Dendritic cell treated with granulocyte-macrophage colony-stimulating factor and Interleukin-4, amounts not matched to agents 40 ng/mL and 50 ng/mL, for 4 days (primary cell): ENCODE measurements at regions of chr4 and their contacts with region 1.

Region 1: DNA sequence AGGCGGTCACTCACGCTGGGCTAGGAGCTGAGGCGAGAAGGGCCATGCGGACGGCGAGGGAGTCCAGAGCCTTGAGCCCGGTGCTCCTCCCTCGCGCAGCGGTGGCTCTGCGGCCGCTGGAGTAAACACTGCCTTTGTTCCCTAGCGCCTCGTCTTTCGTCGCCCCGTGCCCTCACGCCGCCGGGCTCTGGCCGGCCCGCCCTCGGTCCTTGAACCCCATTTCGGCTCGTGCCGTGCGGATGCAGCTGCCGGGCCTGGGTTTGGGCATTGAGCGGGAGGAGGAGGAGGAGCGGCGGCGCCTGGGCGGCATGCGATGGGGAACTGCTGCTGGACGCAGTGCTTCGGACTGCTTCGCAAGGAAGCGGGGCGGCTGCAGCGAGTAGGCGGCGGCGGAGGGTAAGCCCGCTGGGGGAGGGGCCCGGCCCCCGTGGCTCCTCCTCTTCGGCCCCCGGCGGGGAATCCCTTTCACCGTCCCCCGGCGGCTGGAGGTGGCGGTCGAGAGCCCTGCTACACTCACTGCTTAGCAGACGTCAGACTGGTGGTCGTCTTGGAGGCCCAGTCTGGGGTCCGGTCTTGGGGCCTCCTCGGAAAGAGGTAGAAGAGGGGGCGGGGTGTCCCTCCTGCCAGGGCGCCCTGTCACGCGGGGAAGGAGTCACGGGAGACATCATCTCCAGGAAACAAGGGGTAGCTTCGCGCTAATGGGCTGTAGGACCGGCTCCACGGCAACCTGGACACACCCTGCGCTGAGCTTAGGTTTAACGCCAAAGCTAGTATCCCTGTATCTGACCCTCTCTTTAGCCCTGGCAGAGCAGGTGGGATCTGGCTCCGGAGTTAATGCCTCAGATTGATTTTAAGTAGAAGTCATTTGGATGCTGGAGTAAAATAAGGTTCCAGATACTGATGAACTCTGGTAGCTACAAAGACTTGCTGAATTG is at the start of gene AP1AR:
- H3K4me3 Mint-ChIP-seq: peak within 1 kb of the TSS; percentile 98
- H3K27ac Mint-ChIP-seq: peak within 1 kb of the TSS; percentile 99
- H3K4me1 Mint-ChIP-seq: peaks cover 28% of the 10 kb centered on the region
- H3K27me3 Mint-ChIP-seq: no peaks in the 10 kb centered on the region

Region 2: GRCh38 chr4:112099701-112100297 is 132.2 kb before region 1 on chr4:
- intact Hi-C with region 1: loop called (anchors 1 kb)
- H3K4me3 Mint-ChIP-seq: no peak overlapping the region
- H3K27ac Mint-ChIP-seq: no peak overlapping the region
- H3K4me1 Mint-ChIP-seq: peaks cover 13% of the 10 kb centered on the region
- H3K27me3 Mint-ChIP-seq: peaks cover 1% of the 10 kb centered on the region

Region 3: GRCh38 chr4:112145326-112145819 is 86.7 kb before region 1 on chr4 and contains the start of gene FAM241A:
- intact Hi-C with region 1: loop called (anchors 1 kb)
- H3K4me3 Mint-ChIP-seq: peak within 1 kb of the TSS; percentile 86
- H3K27ac Mint-ChIP-seq: peak within 1 kb of the TSS; percentile 85
- H3K4me1 Mint-ChIP-seq: peaks cover 63% of the 10 kb centered on the region
- H3K27me3 Mint-ChIP-seq: no peaks in the 10 kb centered on the region

Region 4: DNA sequence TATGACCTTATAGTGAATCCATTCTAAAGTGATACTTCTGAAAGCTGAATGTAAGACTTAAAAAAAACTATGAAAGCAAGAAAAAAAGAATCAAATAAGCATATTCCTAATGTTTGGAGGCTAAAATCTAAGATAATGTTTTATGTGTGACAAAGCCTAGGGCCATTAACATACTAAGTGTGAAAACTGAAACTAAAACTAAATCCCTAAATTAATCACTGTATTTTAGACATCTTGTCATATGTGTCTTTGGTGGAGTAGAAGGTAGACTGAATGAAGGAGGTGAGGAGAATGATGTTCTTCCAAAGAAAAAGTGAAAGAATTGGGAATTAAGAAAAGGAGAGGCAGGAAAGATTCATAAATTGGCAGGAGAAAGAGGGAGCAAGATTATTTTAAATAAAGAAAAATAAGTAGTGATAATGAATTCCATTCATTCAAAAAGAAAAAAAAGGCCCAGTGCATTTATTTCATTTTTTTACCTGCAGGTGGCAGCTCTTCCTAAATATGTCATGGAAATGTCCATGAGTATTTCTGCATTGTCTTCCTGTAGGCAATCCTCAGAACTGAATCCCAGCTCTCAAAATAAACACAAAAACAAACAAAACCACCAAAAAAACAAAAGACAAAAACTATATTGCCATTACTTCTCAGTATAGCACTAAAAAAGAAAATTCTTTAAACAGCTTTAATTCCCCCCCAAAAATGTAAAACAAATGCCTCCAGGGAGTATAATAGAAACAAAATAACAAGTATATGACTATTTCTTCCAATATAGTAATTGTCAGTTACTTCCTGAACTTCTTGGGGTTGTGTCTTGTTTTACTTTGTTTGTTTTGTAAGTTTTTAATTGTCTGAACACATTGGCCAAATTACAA is 17.4 kb before region 1 on chr4:
- intact Hi-C with region 1: loop called (anchors 2 kb)
- H3K4me3 Mint-ChIP-seq: no peak overlapping the region
- H3K27ac Mint-ChIP-seq: no peak overlapping the region
- H3K4me1 Mint-ChIP-seq: peaks cover 12% of the 10 kb centered on the region
- H3K27me3 Mint-ChIP-seq: no peaks in the 10 kb centered on the region

Region 5: DNA sequence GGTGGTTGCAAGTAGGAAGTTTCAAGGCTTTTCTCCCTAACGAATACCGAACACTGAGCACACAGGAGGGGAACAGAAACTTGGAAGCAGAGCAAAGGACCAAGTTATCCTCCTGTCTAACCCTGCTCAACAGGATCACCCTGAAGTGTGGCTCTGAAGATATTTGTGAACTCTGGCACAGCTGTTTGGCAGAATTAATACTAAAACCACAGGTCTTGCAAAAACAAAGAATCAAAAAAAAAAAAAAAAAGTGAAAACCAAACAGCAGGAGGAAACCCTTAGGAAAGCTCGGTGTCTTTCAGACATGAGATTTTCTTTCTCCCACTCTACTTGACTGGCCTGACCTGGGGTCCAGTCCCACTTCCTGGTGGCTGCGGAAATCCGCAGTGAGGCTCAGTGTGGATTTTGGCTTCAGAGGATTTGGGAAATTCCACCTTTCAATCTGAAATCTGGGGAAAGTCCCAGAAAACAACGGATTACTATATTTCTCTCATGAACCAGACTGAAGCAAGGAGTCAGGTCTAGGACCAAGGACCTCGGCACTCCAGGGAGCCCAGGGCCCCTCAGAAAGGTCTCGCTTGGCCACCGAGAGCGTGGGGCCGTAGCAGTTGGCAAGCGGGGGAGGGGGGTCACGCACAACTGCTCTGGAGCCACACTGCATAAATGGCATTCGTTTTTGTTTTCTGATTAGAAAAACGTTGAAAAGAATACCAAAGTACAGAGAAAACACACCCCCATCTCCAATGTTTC is 52.8 kb after region 1 on chr4:
- intact Hi-C with region 1: loop called (anchors 5 kb)
- H3K4me3 Mint-ChIP-seq: peak overlapping the region; percentile 91
- H3K27ac Mint-ChIP-seq: peak overlapping the region; percentile 91
- H3K4me1 Mint-ChIP-seq: peaks cover 70% of the 10 kb centered on the region
- H3K27me3 Mint-ChIP-seq: no peaks in the 10 kb centered on the region

Region 6: DNA sequence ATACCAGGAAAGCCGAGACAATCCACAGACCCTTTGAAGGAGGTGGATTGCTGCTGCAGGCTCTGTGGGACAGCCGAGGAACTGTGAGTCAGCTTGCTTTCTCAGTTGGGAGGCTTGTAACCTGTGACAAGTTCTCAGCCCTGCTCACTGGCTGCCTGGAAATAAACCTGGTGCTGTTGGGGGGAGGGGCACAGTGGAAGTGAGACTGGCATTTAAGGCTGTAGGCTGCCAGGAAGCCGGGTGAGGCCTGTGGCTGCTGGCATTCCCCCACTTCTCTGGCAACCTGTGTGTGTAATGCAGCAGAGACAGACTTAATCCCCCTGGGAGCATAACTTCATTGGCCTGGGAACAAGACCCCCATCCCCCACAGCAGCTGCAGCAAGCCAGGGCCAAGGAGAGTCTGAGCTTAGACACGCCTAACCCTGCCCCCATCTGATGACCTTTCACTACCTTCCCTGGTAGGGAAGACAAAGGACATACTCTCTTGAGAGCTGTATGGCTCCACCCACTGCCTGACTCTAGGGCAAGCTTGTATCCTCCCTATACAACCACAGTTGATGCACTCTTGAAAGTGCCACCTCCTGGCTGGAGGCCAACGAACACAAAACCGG is 129.2 kb after region 1 on chr4:
- intact Hi-C with region 1: no loop called
- H3K4me3 Mint-ChIP-seq: no peak overlapping the region
- H3K27ac Mint-ChIP-seq: no peak overlapping the region
- H3K4me1 Mint-ChIP-seq: no peaks in the 10 kb centered on the region
- H3K27me3 Mint-ChIP-seq: no peaks in the 10 kb centered on the region

Region 7: GRCh38 chr4:112636688-112637551 is 404.9 kb after region 1 on chr4 and contains the starts of genes LARP7 and ZGRF1:
- intact Hi-C with region 1: loop called (anchors 2 kb)
- H3K4me3 Mint-ChIP-seq: no peak within 1 kb of the TSS
- H3K27ac Mint-ChIP-seq: no peak within 1 kb of the TSS
- H3K4me1 Mint-ChIP-seq: peaks cover 20% of the 10 kb centered on the region
- H3K27me3 Mint-ChIP-seq: no peaks in the 10 kb centered on the region